OCI-LY7 (cell line): ENCODE measurements at regions of chr1 and their contacts with region 1.

Region 1: GRCh38 chr1:40691538-40692428 is at the start of gene NFYC:
- DNase-seq: peak; percentile 100
- H3K4me3 ChIP-seq: peak within 1 kb of the TSS; percentile 94
- H3K27ac ChIP-seq: peak within 1 kb of the TSS; percentile 87
- H3K4me1 ChIP-seq: peaks cover 52% of the 10 kb centered on the region
- CTCF ChIP-seq: no peak
- total RNA-seq, gene NFYC: 29.3 and 39.1 TPM in 2 replicates

Region 2: DNA sequence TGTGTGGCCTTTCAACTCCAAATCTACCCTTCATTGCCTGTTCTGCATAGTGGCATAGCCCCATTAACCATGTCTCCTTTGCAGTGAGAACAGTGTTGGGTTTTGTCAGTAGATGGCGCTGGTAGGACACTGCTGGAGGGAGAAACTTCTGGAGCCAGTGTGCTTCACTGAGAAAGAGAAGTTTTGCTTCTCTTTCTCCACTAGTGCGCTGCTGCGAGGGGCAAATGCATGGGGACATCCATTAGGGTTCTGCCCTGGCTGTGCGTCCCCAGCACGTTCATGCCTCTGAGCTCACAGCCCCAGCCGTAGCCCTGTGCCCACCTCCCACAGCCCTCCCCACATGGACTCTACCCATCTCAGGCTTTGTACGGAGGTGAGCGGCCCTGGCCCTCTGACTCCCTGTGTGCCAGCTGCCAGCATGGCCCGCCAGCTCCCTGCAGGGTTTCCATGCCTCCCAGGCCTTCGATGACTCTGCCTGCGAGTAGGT is 79.4 kb before region 1 on chr1:
- CTCF ChIA-PET with region 1: no interaction called
- POLR2A ChIA-PET with region 1: no interaction called
- intact Hi-C with region 1: no loop called
- DNase-seq: peak; percentile 82
- H3K4me3 ChIP-seq: no peak overlapping the region
- H3K27ac ChIP-seq: no peak overlapping the region
- H3K4me1 ChIP-seq: no peaks in the 10 kb centered on the region
- CTCF ChIP-seq: peak; percentile 97

Region 3: GRCh38 chr1:40663324-40664166 is 28.2 kb before region 1 on chr1:
- CTCF ChIA-PET with region 1: interaction called, 8 read pairs
- POLR2A ChIA-PET with region 1: interaction called, 22 read pairs
- intact Hi-C with region 1: loop called (anchors 1 kb)
- DNase-seq: peak; percentile 95
- H3K4me3 ChIP-seq: peak overlapping the region; percentile 83
- H3K27ac ChIP-seq: peak overlapping the region; percentile 95
- H3K4me1 ChIP-seq: peaks cover 55% of the 10 kb centered on the region
- CTCF ChIP-seq: no peak

Region 4: GRCh38 chr1:40668769-40669525 is 22.8 kb before region 1 on chr1:
- CTCF ChIA-PET with region 1: interaction called, 8 read pairs
- POLR2A ChIA-PET with region 1: interaction called, 22 read pairs
- intact Hi-C with region 1: loop called (anchors 1 kb)
- DNase-seq: peak; percentile 91
- H3K4me3 ChIP-seq: peak overlapping the region; percentile 62
- H3K27ac ChIP-seq: peak overlapping the region; percentile 23
- H3K4me1 ChIP-seq: peaks cover 27% of the 10 kb centered on the region
- CTCF ChIP-seq: peak; percentile 94

Region 5: GRCh38 chr1:40679165-40679953 is 12.4 kb before region 1 on chr1:
- CTCF ChIA-PET with region 1: no interaction called
- POLR2A ChIA-PET with region 1: interaction called, 11 read pairs
- intact Hi-C with region 1: no loop called
- DNase-seq: no peak
- H3K4me3 ChIP-seq: no peak overlapping the region
- H3K27ac ChIP-seq: no peak overlapping the region
- H3K4me1 ChIP-seq: no peaks in the 10 kb centered on the region
- CTCF ChIP-seq: no peak

Region 6: GRCh38 chr1:40709100-40709801 is 17.5 kb after region 1 on chr1:
- CTCF ChIA-PET with region 1: interaction called, 5 read pairs
- POLR2A ChIA-PET with region 1: interaction called, 168 read pairs
- intact Hi-C with region 1: loop called (anchors 2 kb)
- DNase-seq: peak; percentile 97
- H3K4me3 ChIP-seq: peak overlapping the region; percentile 78
- H3K27ac ChIP-seq: peak overlapping the region; percentile 86
- H3K4me1 ChIP-seq: peaks cover 61% of the 10 kb centered on the region
- CTCF ChIP-seq: no peak